Heart left ventricle (tissue), 16 donors: ENCODE measurements at regions of chr6 and their contacts with region 1.

Region 1: GRCh38 chr6:164927288-164928056 is 381.9 kb downstream of the C6orf118 start:
- DNase-seq: peak; percentile 61 to 85 (median 61)
- ATAC-seq: peak; percentile 83 to 96 (median 92)
- H3K4me3 ChIP-seq: peak overlapping the region in 3 of 12 donors; percentile 8 to 28 (median 18)
- H3K27ac ChIP-seq: no peak overlapping the region
- H3K4me1 ChIP-seq: peaks cover 0 to 8% (median 2%) of the 10 kb centered on the region in 12 donors
- H3K27me3 ChIP-seq: no peaks in the 10 kb centered on the region
- CTCF ChIP-seq: peak; percentile 93 to 100 (median 98)
- POLR2A ChIP-seq: no peak

Region 2: GRCh38 chr6:163170294-163170883 is 1757.1 kb before region 1 on chr6:
- intact Hi-C with region 1: loop called in 4 of 10 experiments (anchors 10 kb)
- DNase-seq: no peak
- ATAC-seq: no peak
- H3K4me3 ChIP-seq: no peak overlapping the region
- H3K27ac ChIP-seq: no peak overlapping the region
- H3K4me1 ChIP-seq: no peaks in the 10 kb centered on the region
- H3K27me3 ChIP-seq: no peaks in the 10 kb centered on the region
- CTCF ChIP-seq: peak; percentile 41 to 64 (median 52)
- POLR2A ChIP-seq: no peak

Region 3: GRCh38 chr6:163438940-163439335 is 1488.5 kb before region 1 on chr6:
- intact Hi-C with region 1: loop called in 2 of 10 experiments (anchors 10 kb)
- DNase-seq: peak; percentile 32 to 70 (median 59)
- ATAC-seq: peak in 3 of 4 donors; percentile 43 to 64 (median 57)
- H3K4me3 ChIP-seq: no peak overlapping the region
- H3K27ac ChIP-seq: no peak overlapping the region
- H3K4me1 ChIP-seq: peaks cover 8 to 100% (median 86%) of the 10 kb centered on the region in 12 donors
- H3K27me3 ChIP-seq: no peaks in the 10 kb centered on the region
- CTCF ChIP-seq: no peak
- POLR2A ChIP-seq: no peak

Region 4: DNA sequence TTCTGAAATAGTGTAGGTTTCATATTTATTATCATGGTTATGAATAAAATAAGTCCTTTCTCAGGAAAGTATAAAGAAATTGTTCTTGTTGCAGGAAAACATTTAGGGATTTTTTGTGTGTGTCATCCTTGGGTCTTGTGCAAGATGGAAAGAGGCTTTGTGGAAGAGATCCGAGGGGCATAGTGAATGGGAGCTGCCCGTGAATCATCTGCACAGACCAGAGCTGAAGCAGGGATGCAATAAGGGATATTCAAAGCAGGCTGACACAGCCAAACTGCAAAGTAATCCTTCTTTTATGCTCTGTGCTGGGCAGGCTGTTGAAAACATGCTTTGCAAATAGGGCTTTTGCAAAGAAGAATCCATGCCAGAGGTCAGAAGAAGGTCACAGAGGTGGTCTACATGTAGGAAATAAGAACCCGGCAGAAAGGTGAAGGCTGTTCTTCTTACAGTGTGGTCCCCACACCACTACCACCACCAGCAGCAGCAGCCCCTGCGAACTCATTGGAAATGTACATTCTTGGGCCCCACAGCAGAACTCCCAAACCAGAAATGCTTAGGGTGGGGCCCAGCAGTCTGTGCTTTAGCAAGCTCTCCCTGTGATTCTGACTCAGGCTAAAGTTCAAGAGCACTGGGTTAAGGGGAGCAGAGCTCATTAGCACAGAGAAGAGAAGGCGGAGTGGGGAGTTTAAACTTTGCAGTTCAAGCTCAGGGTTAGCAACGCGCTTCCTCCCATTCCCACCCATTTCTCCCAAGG is 1275.4 kb before region 1 on chr6:
- intact Hi-C with region 1: loop called in 1 of 10 experiments (anchors 5 kb)
- DNase-seq: no peak
- ATAC-seq: no peak
- H3K4me3 ChIP-seq: no peak overlapping the region
- H3K27ac ChIP-seq: no peak overlapping the region
- H3K4me1 ChIP-seq: peaks cover 0 to 5% (median 0%) of the 10 kb centered on the region in 12 donors
- H3K27me3 ChIP-seq: no peaks in the 10 kb centered on the region
- CTCF ChIP-seq: no peak
- POLR2A ChIP-seq: no peak

Region 5: DNA sequence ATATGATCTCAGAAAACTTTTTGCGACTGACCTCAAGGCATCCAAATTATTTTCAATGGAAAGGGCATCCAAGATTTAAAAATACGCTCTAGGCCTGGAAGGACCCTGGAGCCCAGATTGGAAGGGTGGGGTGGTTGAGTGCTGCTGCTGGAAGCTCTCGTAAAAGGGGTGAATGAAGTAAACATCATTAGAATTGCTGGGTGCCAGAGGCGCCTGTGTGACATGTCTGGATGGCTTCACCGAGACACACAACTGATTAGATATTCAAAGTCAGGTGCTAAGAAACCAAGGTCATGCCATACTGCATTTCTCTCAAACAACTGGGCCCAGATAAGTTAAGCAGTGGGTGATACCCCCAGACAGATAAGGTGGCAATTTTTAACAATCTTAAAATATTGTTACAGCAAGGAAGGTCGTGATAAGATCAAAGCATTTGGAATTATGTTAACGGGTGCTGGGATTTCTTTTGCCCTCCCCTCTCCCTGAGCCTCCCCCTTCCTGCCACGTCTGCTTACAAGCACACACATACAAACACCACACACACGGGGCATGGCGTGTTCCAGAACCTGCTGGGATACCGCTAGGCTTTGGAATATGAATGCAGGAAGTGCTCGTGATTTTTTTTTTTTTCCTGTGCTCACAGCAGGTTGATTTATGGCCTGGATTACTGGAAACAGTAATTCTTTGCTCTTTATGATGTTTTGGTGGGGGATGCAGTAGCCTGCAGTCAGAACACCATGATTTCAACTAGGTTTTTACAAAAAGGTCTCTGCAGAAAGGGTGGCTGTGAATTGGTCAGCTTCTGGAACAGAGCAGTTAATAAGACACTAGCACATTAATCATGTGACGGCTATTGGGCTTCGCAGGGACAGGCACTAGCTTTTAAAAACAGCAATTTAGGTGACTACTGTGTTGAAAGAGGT is 961.8 kb before region 1 on chr6:
- intact Hi-C with region 1: loop called in 1 of 10 experiments (anchors 10 kb)
- DNase-seq: peak in 3 of 5 donors; percentile 59 to 74 (median 61)
- ATAC-seq: peak; percentile 47 to 66 (median 54)
- H3K4me3 ChIP-seq: no peak overlapping the region
- H3K27ac ChIP-seq: peak overlapping the region; percentile 77 to 98 (median 90)
- H3K4me1 ChIP-seq: peaks cover 0 to 50% (median 17%) of the 10 kb centered on the region in 12 donors
- H3K27me3 ChIP-seq: no peaks in the 10 kb centered on the region
- CTCF ChIP-seq: no peak
- POLR2A ChIP-seq: no peak

Region 6: DNA sequence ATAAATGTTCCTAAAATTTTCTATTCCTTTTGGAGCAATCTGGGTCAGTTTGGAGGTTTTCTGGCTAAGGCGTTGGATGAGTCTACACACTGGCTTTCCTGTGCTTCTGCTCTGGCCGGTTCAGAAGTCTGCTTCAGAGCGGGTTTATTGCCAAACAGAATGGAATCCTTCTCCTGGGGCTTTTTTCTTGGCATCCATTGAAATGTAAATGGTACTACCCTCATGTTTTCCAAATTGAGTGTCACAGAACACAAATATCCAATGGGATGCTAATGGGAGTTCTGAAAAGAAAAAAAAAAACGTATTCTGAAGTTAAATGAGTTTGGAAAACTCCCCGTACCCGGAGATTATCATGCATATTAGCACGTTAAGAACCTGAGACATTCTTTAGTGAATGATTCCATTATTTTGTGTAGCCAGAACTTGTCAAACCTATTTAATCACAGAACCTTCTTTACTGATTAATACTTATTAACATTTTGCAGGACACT is 582.6 kb before region 1 on chr6:
- intact Hi-C with region 1: loop called in 1 of 10 experiments (anchors 5 kb)
- DNase-seq: peak in 1 of 5 donors; percentile 33
- ATAC-seq: peak; percentile 51 to 93 (median 78)
- H3K4me3 ChIP-seq: no peak overlapping the region
- H3K27ac ChIP-seq: peak overlapping the region in 4 of 12 donors; percentile 25 to 47 (median 27)
- H3K4me1 ChIP-seq: peaks cover 0 to 24% (median 2%) of the 10 kb centered on the region in 12 donors
- H3K27me3 ChIP-seq: no peaks in the 10 kb centered on the region
- CTCF ChIP-seq: no peak
- POLR2A ChIP-seq: no peak

Region 7: DNA sequence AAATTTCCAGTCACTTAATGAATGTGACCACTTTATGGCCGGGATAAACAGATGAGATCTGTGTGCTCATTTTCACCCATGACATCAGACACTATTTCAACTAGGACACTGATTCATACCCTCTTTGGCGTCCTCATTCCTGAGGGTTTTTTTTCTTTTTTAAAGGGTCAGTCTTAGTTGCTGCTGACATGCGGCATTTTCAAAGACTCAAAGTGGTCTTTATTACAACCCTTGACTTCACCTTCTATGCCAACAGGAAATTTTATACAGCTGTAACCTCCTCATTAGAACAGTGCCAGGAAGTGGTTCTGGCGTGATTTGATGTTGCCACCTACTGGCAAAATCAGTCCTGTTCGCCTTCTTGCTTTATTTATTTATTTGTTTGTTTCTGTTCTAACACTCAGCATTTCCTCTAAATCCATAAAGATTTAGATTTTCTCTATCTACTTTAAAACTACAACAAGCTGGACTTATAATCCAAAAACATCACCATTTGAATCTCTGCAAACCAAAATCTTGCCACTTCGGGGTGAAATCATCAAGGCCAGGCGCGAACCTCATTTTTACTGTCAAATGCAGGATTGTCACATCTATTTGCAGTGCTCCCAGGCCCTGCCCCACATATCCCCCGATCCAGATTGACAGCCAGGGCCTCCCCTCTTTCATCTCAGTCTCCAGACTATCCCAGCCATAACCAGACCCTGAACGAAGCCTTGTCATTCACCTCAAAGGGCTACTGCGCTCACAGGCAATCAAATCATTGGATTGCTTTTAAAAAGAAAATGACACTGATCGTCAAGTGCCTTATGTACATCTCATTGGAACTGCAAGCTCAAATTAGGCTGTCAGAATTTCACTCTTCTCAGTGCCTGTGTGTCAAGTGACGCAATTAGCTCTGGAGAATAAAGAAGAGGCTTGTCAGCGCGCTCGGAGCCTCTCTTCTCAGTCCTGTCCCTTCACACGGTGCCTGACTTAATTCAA is 304.4 kb after region 1 on chr6:
- intact Hi-C with region 1: loop called in 2 of 10 experiments (anchors 5 to 10 kb)
- DNase-seq: peak in 2 of 5 donors; percentile 15 to 31
- ATAC-seq: peak; percentile 68 to 88 (median 76)
- H3K4me3 ChIP-seq: peak overlapping the region in 1 of 12 donors; percentile 5
- H3K27ac ChIP-seq: peak overlapping the region in 3 of 12 donors; percentile 36 to 58 (median 38)
- H3K4me1 ChIP-seq: peaks cover 0 to 8% (median 0%) of the 10 kb centered on the region in 12 donors
- H3K27me3 ChIP-seq: no peaks in the 10 kb centered on the region
- CTCF ChIP-seq: peak; percentile 21 to 70 (median 52)
- POLR2A ChIP-seq: no peak